Dorsolateral prefrontal cortex (tissue), 120 donors: ENCODE measurements at regions of chr3 and their contacts with region 1.

Region 1: DNA sequence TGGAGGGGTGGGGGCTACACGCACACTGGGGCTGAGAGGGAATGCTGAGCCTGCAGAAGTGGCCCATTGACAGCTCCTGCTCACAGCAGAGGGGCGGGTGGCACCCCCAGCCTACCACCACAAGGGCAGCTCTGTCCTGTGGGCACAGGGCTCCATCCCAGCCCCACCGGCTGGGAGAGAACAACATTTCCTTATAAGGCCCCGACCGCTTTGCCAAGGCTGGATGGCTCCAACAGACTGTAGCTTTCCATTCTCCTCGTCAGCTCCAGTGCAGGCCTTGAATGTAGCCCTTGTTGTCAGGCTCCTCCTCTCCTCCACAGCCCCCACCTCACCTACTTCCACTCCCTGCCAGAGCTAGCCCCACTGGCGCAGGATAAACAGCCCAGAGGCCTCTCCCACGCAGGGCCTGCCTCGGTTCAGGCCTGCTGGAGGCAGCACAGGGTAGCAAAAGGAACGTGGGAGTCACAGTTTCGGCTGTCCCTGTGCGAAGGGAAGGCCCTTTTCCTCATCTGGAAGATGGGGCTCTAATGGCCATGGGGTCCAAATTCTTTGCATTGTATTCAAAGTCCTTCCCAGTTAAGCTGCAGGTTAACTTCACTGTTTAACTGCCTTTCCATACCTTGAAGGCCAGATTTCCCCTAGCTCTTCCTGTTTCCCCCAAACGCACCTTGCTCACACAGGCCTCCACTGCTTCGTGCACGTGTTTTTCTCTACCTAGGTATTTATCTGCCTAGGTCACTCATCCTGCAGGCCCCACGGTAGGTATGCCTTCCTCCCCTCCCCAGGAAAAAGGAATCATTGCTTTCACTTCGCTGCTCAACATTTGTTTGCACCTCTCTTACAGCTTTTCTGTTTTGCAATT is 101.6 kb upstream of the LPP start:
- DNase-seq: peak; percentile 76 to 99 (median 97)
- H3K4me3 ChIP-seq: peak overlapping the region in 42 of 59 donors; percentile 4 to 59 (median 40)
- H3K27ac ChIP-seq: peak overlapping the region; percentile 77 to 98 (median 93)
- H3K27me3 ChIP-seq: no peaks in the 10 kb centered on the region
- CTCF ChIP-seq: peak; percentile 35 to 88 (median 75)

Region 2: GRCh38 chr3:187738331-187739093 is 313.9 kb before region 1 on chr3:
- intact Hi-C with region 1: loop called in 1 of 2 experiments (anchors 2 kb)
- DNase-seq: peak; percentile 53 to 90 (median 84)
- H3K4me3 ChIP-seq: peak overlapping the region; percentile 55 to 98 (median 84)
- H3K27ac ChIP-seq: peak overlapping the region; percentile 43 to 100 (median 99)
- H3K27me3 ChIP-seq: no peaks in the 10 kb centered on the region
- CTCF ChIP-seq: peak; percentile 59 to 89 (median 79)

Region 3: GRCh38 chr3:188154014-188154808 is 101.8 kb after region 1 on chr3 and contains the start of gene LPP:
- intact Hi-C with region 1: loop called in 1 of 2 experiments (anchors 5 kb)
- DNase-seq: peak; percentile 28 to 81 (median 54)
- H3K4me3 ChIP-seq: peak within 1 kb of the TSS; percentile 63 to 94 (median 84)
- H3K27ac ChIP-seq: peak within 1 kb of the TSS; percentile 35 to 94 (median 83)
- H3K27me3 ChIP-seq: no peaks in the 10 kb centered on the region
- CTCF ChIP-seq: peak in 21 of 56 donors; percentile 4 to 35 (median 14)
- total RNA-seq, gene LPP: 32.7 to 187 (median 61.2) TPM

Region 4: GRCh38 chr3:188270423-188270972 is 218.1 kb after region 1 on chr3:
- intact Hi-C with region 1: loop called in 1 of 2 experiments (anchors 10 kb)
- DNase-seq: no peak
- H3K4me3 ChIP-seq: peak overlapping the region in 4 of 59 donors; percentile 8 to 29 (median 22)
- H3K27ac ChIP-seq: peak overlapping the region in 52 of 59 donors; percentile 2 to 75 (median 50)
- H3K27me3 ChIP-seq: no peaks in the 10 kb centered on the region
- CTCF ChIP-seq: peak in 17 of 56 donors; percentile 8 to 46 (median 19)

Region 5: DNA sequence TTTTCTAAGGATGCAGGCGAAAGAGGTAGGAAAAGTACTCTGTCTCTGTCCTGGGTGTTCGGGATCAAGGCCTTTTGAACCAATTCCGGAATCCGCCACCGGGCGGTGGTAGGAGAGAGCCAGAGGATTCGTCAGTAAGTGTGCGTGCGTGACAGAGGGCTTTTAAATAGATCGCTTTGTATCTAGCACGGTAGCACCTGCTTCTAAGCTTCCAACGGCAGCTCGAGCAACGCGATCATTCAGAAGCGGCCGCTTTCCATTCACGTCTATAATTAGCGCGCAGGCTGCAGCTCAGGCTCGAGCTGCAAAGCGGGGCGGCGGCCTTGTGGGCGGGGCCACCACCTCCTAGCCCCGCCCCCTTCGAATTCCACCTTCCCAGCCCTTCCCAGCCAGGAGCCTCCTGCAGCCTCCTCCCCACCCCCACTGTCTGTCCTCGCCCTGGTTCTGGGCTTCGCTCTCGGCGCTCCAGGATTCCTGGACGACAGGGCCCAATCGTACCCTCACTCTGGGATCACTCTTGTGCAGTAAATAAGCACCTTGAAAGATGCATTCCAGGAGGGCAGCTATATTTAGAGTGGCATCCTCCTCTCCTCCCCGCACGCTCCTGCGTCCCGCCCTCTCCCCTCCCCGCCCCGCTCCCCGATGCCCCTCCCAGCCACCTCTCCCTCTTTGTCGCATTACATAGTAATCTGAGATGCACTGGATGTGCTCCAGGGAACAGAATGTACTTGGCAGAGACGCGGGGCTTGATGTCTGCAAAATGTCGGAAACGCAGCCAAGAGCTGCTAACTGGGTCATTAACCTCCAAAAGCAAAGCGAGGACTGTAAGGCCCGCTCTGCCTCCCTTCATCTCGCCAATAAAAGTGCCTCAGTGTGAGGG is 895.2 kb after region 1 on chr3:
- intact Hi-C with region 1: loop called in 1 of 2 experiments (anchors 2 kb)
- DNase-seq: peak; percentile 79 to 96 (median 88)
- H3K4me3 ChIP-seq: peak overlapping the region; percentile 19 to 71 (median 56)
- H3K27ac ChIP-seq: peak overlapping the region; percentile 84 to 100 (median 97)
- H3K27me3 ChIP-seq: no peaks in the 10 kb centered on the region
- CTCF ChIP-seq: peak in 53 of 56 donors; percentile 19 to 66 (median 48)

Region 6: DNA sequence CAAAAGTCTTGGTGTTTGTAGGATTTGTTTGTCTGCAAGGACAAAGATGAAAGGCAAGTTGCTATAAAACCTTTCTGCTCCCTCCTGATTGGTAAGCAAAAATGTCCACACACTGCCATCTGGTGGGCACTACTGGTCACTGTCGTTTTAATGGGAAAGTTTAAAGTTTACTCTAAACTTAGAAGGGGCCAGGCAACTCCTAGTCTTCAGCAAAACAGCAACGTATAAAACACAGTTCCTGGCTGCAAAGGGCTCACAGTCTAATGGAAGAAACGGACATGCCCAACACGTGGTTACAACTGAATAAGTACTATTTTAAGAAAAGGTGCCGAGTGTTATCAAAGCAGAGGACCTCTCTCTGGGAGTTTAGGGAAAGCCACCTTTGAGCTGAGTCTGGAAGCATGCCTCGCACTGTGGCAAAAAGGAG is 1095.7 kb after region 1 on chr3:
- intact Hi-C with region 1: loop called in 1 of 2 experiments (anchors 10 kb)
- DNase-seq: peak in 9 of 10 donors; percentile 27 to 67 (median 49)
- H3K4me3 ChIP-seq: no peak overlapping the region
- H3K27ac ChIP-seq: peak overlapping the region in 4 of 59 donors; percentile 5 to 32 (median 14)
- H3K27me3 ChIP-seq: peaks cover 0 to 2% (median 0%) of the 10 kb centered on the region in 45 donors
- CTCF ChIP-seq: peak; percentile 68 to 95 (median 86)